Naive thymus-derived CD4-positive, alpha-beta T cell (primary cell): ENCODE measurements at regions of chr20 and their contacts with region 1.

Region 1: GRCh38 chr20:25247956-25248785 is at the start of gene PYGB:
- DNase-seq: peak; percentile 52 to 84 (median 68)
- ATAC-seq: peak; percentile 95
- H3K4me3 ChIP-seq: peak within 1 kb of the TSS; percentile 93
- H3K4me3 Mint-ChIP-seq: peak within 1 kb of the TSS; percentile 85 to 99 (median 94)
- H3K27ac ChIP-seq: peak within 1 kb of the TSS; percentile 75
- H3K27ac Mint-ChIP-seq: peak within 1 kb of the TSS; percentile 79 to 97 (median 87)
- H3K4me1 ChIP-seq: peaks cover 5 to 7% of the 10 kb centered on the region in 2 donors
- H3K4me1 Mint-ChIP-seq: peaks cover 19 to 60% (median 49%) of the 10 kb centered on the region in 7 donors
- H3K27me3 ChIP-seq: no peaks in the 10 kb centered on the region
- H3K27me3 Mint-ChIP-seq: peaks cover 0 to 13% (median 0%) of the 10 kb centered on the region in 5 donors
- total RNA-seq, gene PYGB: 29.8 to 45.2 (median 43.6) TPM

Region 2: DNA sequence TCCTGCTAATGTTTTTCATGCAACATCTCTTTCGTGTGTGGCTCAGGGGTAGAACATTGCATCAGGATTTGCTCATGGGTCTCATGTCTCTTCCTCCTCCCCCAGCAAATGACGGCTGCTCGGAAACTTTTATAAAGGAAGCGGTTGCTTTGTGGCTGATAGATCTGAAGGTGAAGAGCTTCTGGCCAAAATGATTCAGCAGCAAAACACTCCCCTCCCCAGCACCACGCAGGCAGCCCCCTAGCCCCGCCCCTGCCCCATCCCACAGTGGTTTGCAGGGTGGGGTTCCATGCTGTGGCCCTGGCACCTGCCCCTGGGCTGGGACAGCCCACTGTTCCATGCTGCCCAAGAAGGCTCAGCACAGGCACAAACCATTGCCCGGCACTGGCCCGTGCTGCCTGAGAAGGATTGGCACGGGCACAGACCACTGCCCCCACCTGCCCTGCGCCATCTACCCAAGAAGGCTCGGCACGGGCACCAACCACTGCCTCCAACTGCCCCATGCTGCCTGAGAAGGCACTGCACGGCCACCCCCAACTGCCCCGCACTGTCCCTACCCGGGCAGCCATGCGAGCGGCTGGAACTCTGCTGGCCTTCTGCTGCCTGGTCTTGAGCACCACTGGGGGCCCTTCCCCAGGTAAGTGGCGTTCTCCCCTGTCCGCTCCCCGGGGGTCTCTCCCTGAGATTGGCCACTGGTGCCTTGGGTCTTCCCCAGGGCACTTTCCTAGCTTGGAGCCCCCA is 299.1 kb before region 1 on chr20 and contains the start of gene CST7:
- CTCF ChIA-PET with region 1: no interaction called
- POLR2A ChIA-PET with region 1: no interaction called
- intact Hi-C with region 1: loop called in 1 of 2 experiments (anchors 5 kb)
- DNase-seq: peak; percentile 33 to 85 (median 77)
- ATAC-seq: peak; percentile 90
- H3K4me3 ChIP-seq: peak within 1 kb of the TSS; percentile 66
- H3K4me3 Mint-ChIP-seq: peak within 1 kb of the TSS in 9 of 10 donors; percentile 27 to 94 (median 54)
- H3K27ac ChIP-seq: no peak within 1 kb of the TSS
- H3K27ac Mint-ChIP-seq: peak within 1 kb of the TSS; percentile 21 to 94 (median 80)
- H3K4me1 ChIP-seq: peaks cover 6 to 33% of the 10 kb centered on the region in 2 donors
- H3K4me1 Mint-ChIP-seq: peaks cover 12 to 75% (median 25%) of the 10 kb centered on the region in 7 donors
- H3K27me3 ChIP-seq: no peaks in the 10 kb centered on the region
- H3K27me3 Mint-ChIP-seq: no peaks in the 10 kb centered on the region
- total RNA-seq, gene CST7: 1.4 to 74.9 (median 11.5) TPM

Region 3: GRCh38 chr20:25177890-25178321 is 70.3 kb before region 1 on chr20:
- CTCF ChIA-PET with region 1: no interaction called
- POLR2A ChIA-PET with region 1: no interaction called
- intact Hi-C with region 1: no loop called
- DNase-seq: no peak
- ATAC-seq: no peak
- H3K4me3 ChIP-seq: no peak overlapping the region
- H3K4me3 Mint-ChIP-seq: no peak overlapping the region
- H3K27ac ChIP-seq: no peak overlapping the region
- H3K27ac Mint-ChIP-seq: no peak overlapping the region
- H3K4me1 ChIP-seq: no peaks in the 10 kb centered on the region
- H3K4me1 Mint-ChIP-seq: no peaks in the 10 kb centered on the region
- H3K27me3 ChIP-seq: no peaks in the 10 kb centered on the region
- H3K27me3 Mint-ChIP-seq: peaks cover 0 to 20% (median 0%) of the 10 kb centered on the region in 5 donors

Region 4: DNA sequence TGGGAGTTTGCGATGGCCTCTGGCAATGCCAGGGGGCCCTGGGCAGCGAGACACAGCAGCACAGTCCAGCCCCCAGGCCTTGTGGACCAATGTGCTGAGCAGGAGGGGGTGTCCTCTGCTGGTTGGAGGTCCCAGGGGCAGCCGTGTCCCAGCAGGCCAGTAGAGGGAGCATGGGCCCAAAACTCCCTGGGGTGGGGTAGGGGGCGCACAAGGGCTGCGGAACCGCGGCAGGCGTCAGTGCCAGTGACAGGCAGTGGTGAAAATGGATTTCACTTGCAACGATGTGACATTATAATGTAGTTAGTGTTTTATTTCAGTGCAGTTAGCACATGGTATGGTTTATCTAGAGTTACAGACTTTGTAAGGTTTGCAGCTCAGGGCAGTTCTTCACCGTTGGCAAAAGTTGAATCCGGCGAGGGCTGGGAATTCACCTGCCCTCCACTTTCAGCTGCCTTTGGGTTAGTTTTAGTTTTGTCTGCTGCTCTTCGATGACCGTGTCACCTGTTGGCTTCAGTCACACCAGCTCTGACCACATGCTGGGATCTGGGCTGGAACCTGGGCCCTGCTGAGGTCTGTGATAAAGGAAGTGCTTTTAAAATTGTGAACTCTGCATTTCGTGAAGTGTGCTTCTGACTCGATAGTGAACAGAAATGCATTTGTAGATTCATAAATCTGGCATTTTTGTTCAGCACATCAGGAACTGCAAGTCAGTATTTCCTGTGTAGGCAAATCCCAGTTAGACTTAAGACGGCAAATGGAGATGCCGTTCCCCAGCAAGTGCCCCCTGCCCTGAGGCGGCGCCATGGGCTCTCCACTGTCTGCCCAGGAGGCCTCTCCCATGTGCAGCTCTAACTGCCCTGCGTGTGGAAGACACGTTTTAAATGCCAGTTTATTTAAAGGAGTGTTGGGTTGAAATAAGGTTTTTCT is 46.6 kb after region 1 on chr20:
- CTCF ChIA-PET with region 1: no interaction called
- POLR2A ChIA-PET with region 1: interaction called, 3 read pairs
- intact Hi-C with region 1: loop called in 1 of 2 experiments (anchors 5 kb)
- DNase-seq: peak; percentile 43 to 74 (median 59)
- ATAC-seq: peak; percentile 90
- H3K4me3 ChIP-seq: no peak overlapping the region
- H3K4me3 Mint-ChIP-seq: no peak overlapping the region
- H3K27ac ChIP-seq: no peak overlapping the region
- H3K27ac Mint-ChIP-seq: peak overlapping the region in 5 of 9 donors; percentile 29 to 78 (median 57)
- H3K4me1 ChIP-seq: no peaks in the 10 kb centered on the region
- H3K4me1 Mint-ChIP-seq: peaks cover 0 to 12% (median 3%) of the 10 kb centered on the region in 7 donors
- H3K27me3 ChIP-seq: no peaks in the 10 kb centered on the region
- H3K27me3 Mint-ChIP-seq: no peaks in the 10 kb centered on the region

Region 5: GRCh38 chr20:25390538-25391528 is 142.7 kb after region 1 on chr20 and contains the start of gene ABHD12:
- CTCF ChIA-PET with region 1: no interaction called
- POLR2A ChIA-PET with region 1: interaction called, 3 read pairs
- intact Hi-C with region 1: loop called (anchors 1 kb)
- DNase-seq: peak; percentile 80 to 93 (median 89)
- ATAC-seq: peak; percentile 96
- H3K4me3 ChIP-seq: peak within 1 kb of the TSS; percentile 62
- H3K4me3 Mint-ChIP-seq: peak within 1 kb of the TSS; percentile 83 to 94 (median 88)
- H3K27ac ChIP-seq: peak within 1 kb of the TSS; percentile 74
- H3K27ac Mint-ChIP-seq: peak within 1 kb of the TSS; percentile 46 to 96 (median 82)
- H3K4me1 ChIP-seq: no peaks in the 10 kb centered on the region
- H3K4me1 Mint-ChIP-seq: peaks cover 5 to 22% (median 18%) of the 10 kb centered on the region in 7 donors
- H3K27me3 ChIP-seq: no peaks in the 10 kb centered on the region
- H3K27me3 Mint-ChIP-seq: peaks cover 0 to 6% (median 0%) of the 10 kb centered on the region in 5 donors
- total RNA-seq, gene ABHD12: 16.5 to 27.6 (median 22.5) TPM

Region 6: GRCh38 chr20:25623736-25624499 is 375.7 kb after region 1 on chr20 and contains the start of gene NANP:
- CTCF ChIA-PET with region 1: no interaction called
- POLR2A ChIA-PET with region 1: interaction called, 3 read pairs
- intact Hi-C with region 1: loop called (anchors 5 kb)
- DNase-seq: peak; percentile 62 to 92 (median 73)
- ATAC-seq: peak; percentile 86
- H3K4me3 ChIP-seq: peak within 1 kb of the TSS; percentile 96
- H3K4me3 Mint-ChIP-seq: peak within 1 kb of the TSS; percentile 86 to 96 (median 94)
- H3K27ac ChIP-seq: peak within 1 kb of the TSS; percentile 70
- H3K27ac Mint-ChIP-seq: peak within 1 kb of the TSS; percentile 78 to 96 (median 90)
- H3K4me1 ChIP-seq: peaks cover 0 to 12% of the 10 kb centered on the region in 2 donors
- H3K4me1 Mint-ChIP-seq: peaks cover 14 to 34% (median 18%) of the 10 kb centered on the region in 7 donors
- H3K27me3 ChIP-seq: no peaks in the 10 kb centered on the region
- H3K27me3 Mint-ChIP-seq: peaks cover 0 to 3% (median 0%) of the 10 kb centered on the region in 5 donors
- total RNA-seq, gene NANP: 1.0 to 7.0 (median 1.9) TPM